ENCODE measurements at regions of chr7 and their contacts with region 1.

Region 1: DNA sequence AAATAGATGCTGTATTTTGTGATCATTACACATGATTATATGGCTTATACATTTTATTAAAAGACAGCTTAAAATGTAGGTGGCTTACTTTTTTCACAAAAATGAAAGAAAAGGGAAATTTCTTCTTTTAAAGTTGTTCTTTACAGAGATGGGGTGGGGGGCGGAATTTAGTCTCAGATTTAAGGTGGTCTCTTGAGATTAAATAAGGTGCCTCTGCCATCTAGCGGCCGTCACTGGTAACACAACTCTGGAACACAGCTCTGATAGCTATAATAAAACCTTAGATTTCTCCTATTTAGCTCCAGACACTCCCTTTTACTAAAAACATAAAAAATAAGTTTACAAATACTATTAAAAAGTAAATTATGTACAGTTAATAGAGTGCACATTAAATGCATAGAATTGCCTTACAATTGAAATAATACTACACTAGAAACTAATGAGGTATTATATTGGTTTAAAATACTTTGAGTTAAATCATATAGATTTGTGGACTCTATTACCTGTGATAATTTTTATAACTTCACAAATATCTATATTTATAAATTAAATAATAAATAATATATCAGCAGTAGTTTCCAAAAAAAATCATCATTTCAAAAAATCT is 210.9 kb downstream of the DGKB start:
- DNase-seq: peak; percentile 10 to 56 (median 24)
- ATAC-seq: no peak
- H3K4me3 ChIP-seq: no peak overlapping the region
- H3K4me3 Mint-ChIP-seq: no peak overlapping the region
- H3K27ac ChIP-seq: no peak overlapping the region
- H3K27ac Mint-ChIP-seq: no peak overlapping the region
- H3K4me1 ChIP-seq: no peaks in the 10 kb centered on the region
- H3K4me1 Mint-ChIP-seq: no peaks in the 10 kb centered on the region
- H3K27me3 ChIP-seq: no peaks in the 10 kb centered on the region
- H3K27me3 Mint-ChIP-seq: no peaks in the 10 kb centered on the region
- CTCF ChIP-seq: peak; percentile 93

Region 2: GRCh38 chr7:13279854-13280435 is 1411.8 kb before region 1 on chr7:
- CTCF ChIA-PET with region 1: interaction called, 5 read pairs
- POLR2A ChIA-PET with region 1: no interaction called
- intact Hi-C with region 1: loop called (anchors 2 kb)
- DNase-seq: peak in 3 of 14 experiments; percentile 21 to 37 (median 28)
- ATAC-seq: no peak
- H3K4me3 ChIP-seq: no peak overlapping the region
- H3K4me3 Mint-ChIP-seq: no peak overlapping the region
- H3K27ac ChIP-seq: no peak overlapping the region
- H3K27ac Mint-ChIP-seq: no peak overlapping the region
- H3K4me1 ChIP-seq: no peaks in the 10 kb centered on the region
- H3K4me1 Mint-ChIP-seq: no peaks in the 10 kb centered on the region
- H3K27me3 ChIP-seq: peaks cover 0 to 15% of the 10 kb centered on the region in 2 experiments
- H3K27me3 Mint-ChIP-seq: peaks cover 16% of the 10 kb centered on the region
- CTCF ChIP-seq: peak; percentile 62

Region 3: DNA sequence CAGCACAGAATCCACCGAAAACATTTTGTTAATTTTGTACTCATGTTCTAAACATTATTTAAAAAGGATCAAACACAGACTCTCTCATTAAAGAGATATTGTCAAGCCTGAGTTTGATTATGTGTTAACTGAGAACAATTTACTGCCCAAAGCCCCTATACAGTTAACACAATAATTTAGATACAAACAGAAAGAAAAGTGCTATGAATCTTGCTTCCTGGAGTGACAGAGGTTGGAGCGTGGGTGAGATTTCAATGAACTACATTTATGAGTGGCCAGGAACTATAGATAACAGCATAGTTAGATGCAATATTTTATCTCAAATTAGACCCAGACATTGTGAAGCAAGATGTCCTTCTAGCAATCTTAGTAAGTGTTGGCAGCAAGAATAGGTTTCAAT is 253.3 kb before region 1 on chr7:
- CTCF ChIA-PET with region 1: no interaction called
- POLR2A ChIA-PET with region 1: no interaction called
- intact Hi-C with region 1: no loop called
- DNase-seq: no peak
- ATAC-seq: no peak
- H3K4me3 ChIP-seq: no peak overlapping the region
- H3K4me3 Mint-ChIP-seq: no peak overlapping the region
- H3K27ac ChIP-seq: no peak overlapping the region
- H3K27ac Mint-ChIP-seq: no peak overlapping the region
- H3K4me1 ChIP-seq: no peaks in the 10 kb centered on the region
- H3K4me1 Mint-ChIP-seq: no peaks in the 10 kb centered on the region
- H3K27me3 ChIP-seq: no peaks in the 10 kb centered on the region
- H3K27me3 Mint-ChIP-seq: no peaks in the 10 kb centered on the region
- CTCF ChIP-seq: no peak

Region 4: DNA sequence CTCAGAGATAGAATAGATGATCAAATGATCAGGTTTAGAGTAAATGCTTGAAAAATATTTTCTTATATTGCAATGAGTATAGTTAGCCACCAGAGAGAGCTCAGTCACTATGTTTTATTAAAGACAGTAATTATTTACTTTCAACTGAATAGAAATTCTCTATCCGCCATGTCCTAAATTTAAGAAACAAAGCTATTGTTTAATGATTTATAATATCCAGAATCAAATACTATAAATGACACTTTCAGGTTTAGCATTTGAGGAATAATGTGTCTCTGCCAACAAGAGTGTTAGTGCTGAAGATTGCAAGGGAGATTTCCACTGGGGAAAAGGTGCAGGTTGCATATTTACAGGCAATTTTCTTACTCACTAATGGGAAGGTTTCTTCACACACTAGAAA is 26.1 kb after region 1 on chr7:
- CTCF ChIA-PET with region 1: no interaction called
- POLR2A ChIA-PET with region 1: no interaction called
- intact Hi-C with region 1: no loop called
- DNase-seq: no peak
- ATAC-seq: no peak
- H3K4me3 ChIP-seq: no peak overlapping the region
- H3K4me3 Mint-ChIP-seq: no peak overlapping the region
- H3K27ac ChIP-seq: no peak overlapping the region
- H3K27ac Mint-ChIP-seq: no peak overlapping the region
- H3K4me1 ChIP-seq: no peaks in the 10 kb centered on the region
- H3K4me1 Mint-ChIP-seq: no peaks in the 10 kb centered on the region
- H3K27me3 ChIP-seq: no peaks in the 10 kb centered on the region
- H3K27me3 Mint-ChIP-seq: no peaks in the 10 kb centered on the region
- CTCF ChIP-seq: no peak

Region 5: DNA sequence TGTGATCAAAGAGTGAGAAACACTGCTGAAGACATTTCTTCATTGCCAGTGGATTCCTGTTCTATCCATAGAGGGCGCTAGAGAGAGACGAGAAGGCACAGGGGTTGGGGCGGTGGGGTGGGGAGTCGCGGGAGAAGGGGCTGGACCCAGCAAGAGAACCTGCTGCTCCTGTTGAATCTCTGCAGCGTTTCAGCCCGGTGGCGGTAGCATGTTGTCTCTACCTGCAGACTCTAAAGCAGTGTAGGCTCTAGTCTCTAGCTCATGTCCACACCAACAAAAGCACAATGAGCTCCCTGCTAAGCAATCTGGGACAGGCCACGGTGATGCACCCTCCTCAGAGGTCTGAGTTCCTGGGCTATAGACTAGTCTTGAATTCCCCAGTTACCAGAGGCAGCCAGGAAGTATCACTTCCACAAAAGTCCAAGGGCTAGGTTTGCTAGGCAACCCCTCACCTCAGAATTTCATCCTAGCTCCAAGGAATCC is 43.2 kb after region 1 on chr7:
- CTCF ChIA-PET with region 1: no interaction called
- POLR2A ChIA-PET with region 1: no interaction called
- intact Hi-C with region 1: no loop called
- DNase-seq: no peak
- ATAC-seq: no peak
- H3K4me3 ChIP-seq: no peak overlapping the region
- H3K4me3 Mint-ChIP-seq: no peak overlapping the region
- H3K27ac ChIP-seq: no peak overlapping the region
- H3K27ac Mint-ChIP-seq: no peak overlapping the region
- H3K4me1 ChIP-seq: no peaks in the 10 kb centered on the region
- H3K4me1 Mint-ChIP-seq: no peaks in the 10 kb centered on the region
- H3K27me3 ChIP-seq: no peaks in the 10 kb centered on the region
- H3K27me3 Mint-ChIP-seq: no peaks in the 10 kb centered on the region
- CTCF ChIP-seq: no peak

Region 6: GRCh38 chr7:16071246-16071857 is 1379.7 kb after region 1 on chr7:
- CTCF ChIA-PET with region 1: no interaction called
- POLR2A ChIA-PET with region 1: no interaction called
- intact Hi-C with region 1: loop called in 1 of 2 experiments (anchors 10 kb)
- DNase-seq: peak in 3 of 14 experiments; percentile 46 to 52 (median 48)
- ATAC-seq: no peak
- H3K4me3 ChIP-seq: no peak overlapping the region
- H3K4me3 Mint-ChIP-seq: no peak overlapping the region
- H3K27ac ChIP-seq: no peak overlapping the region
- H3K27ac Mint-ChIP-seq: no peak overlapping the region
- H3K4me1 ChIP-seq: no peaks in the 10 kb centered on the region
- H3K4me1 Mint-ChIP-seq: no peaks in the 10 kb centered on the region
- H3K27me3 ChIP-seq: no peaks in the 10 kb centered on the region
- H3K27me3 Mint-ChIP-seq: no peaks in the 10 kb centered on the region
- CTCF ChIP-seq: peak; percentile 88